ENCODE measurements at regions of chr1 and their contacts with region 1.

Region 1: GRCh38 chr1:96966536-96967138 is 245.1 kb downstream of the PTBP2 start:
- DNase-seq: peak; percentile 47 to 76
- ATAC-seq: peak; percentile 47 to 76 (median 68)
- H3K4me3 ChIP-seq: no peak overlapping the region
- H3K27ac ChIP-seq: no peak overlapping the region
- H3K4me1 ChIP-seq: no peaks in the 10 kb centered on the region
- H3K27me3 ChIP-seq: no peaks in the 10 kb centered on the region
- CTCF ChIP-seq: peak; percentile 90

Region 2: GRCh38 chr1:96782856-96783255 is 183.8 kb before region 1 on chr1:
- intact Hi-C with region 1: no loop called
- DNase-seq: no peak
- ATAC-seq: no peak
- H3K4me3 ChIP-seq: no peak overlapping the region
- H3K27ac ChIP-seq: no peak overlapping the region
- H3K4me1 ChIP-seq: no peaks in the 10 kb centered on the region
- H3K27me3 ChIP-seq: no peaks in the 10 kb centered on the region
- CTCF ChIP-seq: no peak

Region 3: GRCh38 chr1:96945509-96946084 is 21.0 kb before region 1 on chr1:
- intact Hi-C with region 1: no loop called
- DNase-seq: no peak
- ATAC-seq: no peak
- H3K4me3 ChIP-seq: no peak overlapping the region
- H3K27ac ChIP-seq: no peak overlapping the region
- H3K4me1 ChIP-seq: no peaks in the 10 kb centered on the region
- H3K27me3 ChIP-seq: no peaks in the 10 kb centered on the region
- CTCF ChIP-seq: no peak

Region 4: DNA sequence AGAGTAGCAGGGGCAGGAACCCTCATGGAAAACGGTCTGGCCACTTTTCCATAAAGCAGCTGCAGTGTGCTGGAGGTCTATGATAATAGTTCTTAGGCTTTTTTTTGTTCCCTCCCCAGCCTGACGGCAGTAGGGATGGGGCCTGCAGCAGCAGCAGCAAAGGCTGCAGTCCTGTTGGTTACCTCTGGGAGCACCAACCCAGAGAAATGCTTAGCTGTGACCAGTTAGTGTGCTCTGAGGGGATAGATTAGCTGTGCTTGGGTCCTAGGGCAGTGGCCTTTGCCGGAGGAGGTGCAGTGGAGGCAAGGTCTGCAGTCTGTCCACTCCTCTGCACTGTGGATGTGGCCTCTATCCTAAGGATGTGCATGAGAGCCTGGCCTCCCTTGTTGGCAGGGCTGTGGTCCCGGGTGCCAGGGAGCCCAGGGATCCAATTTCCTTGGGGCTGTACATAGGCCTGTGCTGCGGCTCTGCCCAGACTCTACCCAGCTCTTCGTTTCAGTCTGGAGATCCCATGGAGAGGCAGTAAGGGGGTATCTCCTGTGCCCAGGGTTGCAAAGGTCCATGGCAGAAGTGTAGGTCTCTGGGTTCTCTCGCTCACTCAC is 77.6 kb after region 1 on chr1:
- intact Hi-C with region 1: loop called in 1 of 2 experiments (anchors 2 kb)
- DNase-seq: no peak
- ATAC-seq: no peak
- H3K4me3 ChIP-seq: no peak overlapping the region
- H3K27ac ChIP-seq: no peak overlapping the region
- H3K4me1 ChIP-seq: no peaks in the 10 kb centered on the region
- H3K27me3 ChIP-seq: no peaks in the 10 kb centered on the region
- CTCF ChIP-seq: no peak